ENCODE measurements at regions of chr6 and their contacts with region 1.

Region 1: DNA sequence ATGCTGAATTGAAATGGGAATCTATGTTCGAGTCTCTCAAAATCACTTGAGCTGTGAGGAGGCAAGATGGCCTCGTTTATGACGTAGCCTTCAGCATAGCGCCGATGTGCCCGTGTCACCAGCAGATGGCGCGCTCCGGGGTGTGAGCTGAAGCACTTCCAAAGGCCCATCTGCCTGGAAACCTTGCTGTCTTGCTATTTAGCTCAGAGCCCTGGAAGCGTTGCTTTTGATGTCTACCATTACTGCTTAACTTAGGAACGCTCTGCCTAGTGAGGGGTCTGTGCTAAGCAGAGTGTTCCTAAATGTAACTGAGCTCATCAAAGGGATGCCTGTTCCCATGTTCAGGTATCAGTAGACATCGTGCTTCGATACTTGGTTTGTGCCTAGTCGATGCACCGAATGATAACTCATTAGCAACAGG is 67.7 kb downstream of the SYCP2L start:
- DNase-seq: peak; percentile 27 to 89 (median 67)
- ATAC-seq: peak; percentile 80
- H3K4me3 ChIP-seq: no peak overlapping the region
- H3K27ac ChIP-seq: no peak overlapping the region
- H3K4me1 ChIP-seq: no peaks in the 10 kb centered on the region
- H3K27me3 ChIP-seq: no peaks in the 10 kb centered on the region
- CTCF ChIP-seq: peak; percentile 57 to 78

Region 2: GRCh38 chr6:10582774-10583508 is 371.7 kb before region 1 on chr6:
- intact Hi-C with region 1: no loop called
- DNase-seq: peak in 1 of 4 donors; percentile 21
- ATAC-seq: peak; percentile 71
- H3K4me3 ChIP-seq: no peak overlapping the region
- H3K27ac ChIP-seq: no peak overlapping the region
- H3K4me1 ChIP-seq: peaks cover 0 to 18% of the 10 kb centered on the region in 2 donors
- H3K27me3 ChIP-seq: no peaks in the 10 kb centered on the region
- CTCF ChIP-seq: no peak

Region 3: DNA sequence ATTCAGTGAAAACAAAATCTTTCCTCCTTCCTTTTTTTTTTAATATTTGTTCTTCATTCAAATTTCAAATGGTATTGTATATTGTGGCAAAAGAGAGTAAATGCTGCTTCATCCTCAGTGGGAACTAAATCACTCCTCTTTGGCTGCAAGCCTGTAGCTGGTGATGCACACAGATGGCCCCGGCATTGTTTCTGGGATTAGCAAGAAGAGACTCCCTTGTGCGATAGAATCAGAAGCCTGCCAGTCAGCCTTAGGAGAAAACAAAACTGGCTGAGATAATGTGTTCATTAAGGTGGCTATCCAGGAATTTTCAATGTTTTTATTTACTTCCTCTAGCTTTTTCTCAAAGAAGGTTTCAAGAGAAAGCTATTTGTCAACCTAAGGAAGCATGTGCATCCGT is 110.2 kb after region 1 on chr6:
- intact Hi-C with region 1: loop called in 1 of 2 experiments (anchors 5 kb)
- DNase-seq: no peak
- ATAC-seq: no peak
- H3K4me3 ChIP-seq: no peak overlapping the region
- H3K27ac ChIP-seq: no peak overlapping the region
- H3K4me1 ChIP-seq: no peaks in the 10 kb centered on the region
- H3K27me3 ChIP-seq: peaks cover 0 to 12% of the 10 kb centered on the region in 2 donors
- CTCF ChIP-seq: no peak

Region 4: GRCh38 chr6:11575408-11576033 is 620.9 kb after region 1 on chr6:
- intact Hi-C with region 1: loop called in 1 of 2 experiments (anchors 5 kb)
- DNase-seq: peak in 3 of 4 donors; percentile 56 to 80 (median 57)
- ATAC-seq: peak; percentile 100
- H3K4me3 ChIP-seq: peak overlapping the region in 1 of 2 donors; percentile 13
- H3K27ac ChIP-seq: peak overlapping the region in 1 of 2 donors; percentile 40
- H3K4me1 ChIP-seq: peaks cover 0 to 10% of the 10 kb centered on the region in 2 donors
- H3K27me3 ChIP-seq: no peaks in the 10 kb centered on the region
- CTCF ChIP-seq: peak; percentile 89 to 93